Ascending aorta (tissue), 2 donors: ENCODE measurements at regions of chr19 and their contacts with region 1.

Region 1: DNA sequence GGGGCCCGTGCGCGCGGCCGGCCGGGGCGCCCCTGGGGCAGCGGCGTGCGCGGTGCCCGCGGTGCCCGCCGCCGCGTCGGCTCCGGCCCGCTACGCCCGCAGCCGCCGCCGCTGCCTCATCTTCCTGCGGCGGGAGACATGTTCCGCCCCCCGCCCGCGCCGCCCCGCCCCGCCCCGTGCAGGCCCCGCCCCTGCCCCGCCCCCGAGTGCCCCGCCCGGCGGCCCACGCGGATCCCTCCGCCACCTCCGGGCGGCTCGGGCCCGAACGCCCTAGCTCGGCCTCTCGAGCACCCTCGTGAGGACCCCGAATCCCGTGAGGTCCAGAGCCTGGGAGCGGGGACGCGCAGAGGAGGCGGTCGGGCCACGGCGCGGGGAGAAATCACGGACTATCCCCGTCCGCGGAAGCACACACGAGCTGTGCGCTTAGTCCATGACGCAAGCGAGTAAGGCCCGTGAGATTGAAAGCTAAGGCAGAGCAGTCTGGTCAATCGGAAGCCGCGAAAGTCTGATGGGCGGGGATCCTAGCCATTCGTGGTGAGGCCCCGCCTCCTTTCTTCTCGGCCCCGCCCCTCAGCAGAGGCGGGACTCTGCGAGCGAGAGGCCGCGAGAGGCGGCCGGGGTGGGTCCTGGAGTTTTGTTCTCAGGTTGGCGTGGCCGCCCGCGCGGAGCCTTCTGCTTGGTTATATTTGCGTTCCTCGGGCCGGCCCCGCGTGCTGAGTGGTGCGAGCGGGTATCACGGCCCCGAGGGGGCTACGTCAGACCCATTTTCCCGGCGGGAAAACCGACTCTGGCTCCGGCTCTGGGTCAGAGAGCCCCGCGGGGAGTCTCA is at the start of gene TCF3:
- DNase-seq: peak; percentile 92 to 99
- H3K4me3 ChIP-seq: peak within 1 kb of the TSS; percentile 87 to 98
- H3K27ac ChIP-seq: peak within 1 kb of the TSS; percentile 99 to 100
- H3K4me1 ChIP-seq: peaks cover 0 to 14% of the 10 kb centered on the region in 2 donors
- H3K27me3 ChIP-seq: no peaks in the 10 kb centered on the region
- CTCF ChIP-seq: no peak
- total RNA-seq, gene TCF3: 209 TPM

Region 2: DNA sequence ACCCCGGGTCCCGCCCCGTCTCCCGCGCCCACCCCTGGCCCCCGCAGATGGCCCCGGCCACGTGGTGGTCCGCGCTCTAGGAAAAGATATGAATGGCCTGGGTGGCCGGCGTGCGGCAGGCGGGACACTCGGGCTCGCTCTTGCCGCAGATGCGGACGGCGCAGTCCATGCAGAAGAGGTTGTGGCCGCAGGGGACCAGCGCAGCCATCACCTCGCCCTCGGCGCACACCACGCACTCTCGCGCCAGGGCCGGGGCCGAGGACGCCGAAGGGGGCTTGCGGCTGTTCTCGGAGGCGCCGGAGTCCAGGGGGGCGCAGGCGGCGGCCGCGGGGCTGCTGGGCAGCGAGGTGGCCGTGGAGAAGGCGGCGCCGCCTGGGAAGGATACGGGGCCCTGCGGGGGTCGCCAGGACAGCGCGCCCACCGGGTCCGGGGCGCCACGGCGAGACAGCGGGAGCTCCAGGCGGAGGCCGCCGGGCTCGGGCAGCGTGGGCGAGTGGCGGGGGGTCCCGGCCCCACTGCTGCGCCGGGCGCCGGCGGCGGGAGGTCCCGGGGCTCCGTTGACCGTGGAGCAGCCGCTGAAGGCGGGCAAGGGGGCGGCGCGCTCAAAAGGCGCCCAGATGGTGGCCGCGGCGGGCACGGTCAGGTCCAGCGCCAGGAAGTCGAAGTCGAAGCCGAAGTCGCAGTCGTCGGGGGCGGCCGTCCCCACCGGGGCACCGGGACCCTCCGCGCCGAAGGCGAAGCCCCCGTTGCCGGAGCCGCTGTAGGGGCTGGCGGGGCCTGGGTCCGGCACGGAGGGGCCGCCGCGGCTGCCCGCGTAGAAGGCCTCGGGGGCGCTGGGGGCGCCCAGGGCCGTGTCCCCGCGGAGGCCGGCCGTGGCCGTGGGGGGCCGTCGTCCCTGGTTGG is 96.9 kb before region 1 on chr19:
- intact Hi-C with region 1: no loop called
- DNase-seq: no peak
- H3K4me3 ChIP-seq: no peak overlapping the region
- H3K27ac ChIP-seq: no peak overlapping the region
- H3K4me1 ChIP-seq: no peaks in the 10 kb centered on the region
- H3K27me3 ChIP-seq: no peaks in the 10 kb centered on the region
- CTCF ChIP-seq: no peak

Region 3: DNA sequence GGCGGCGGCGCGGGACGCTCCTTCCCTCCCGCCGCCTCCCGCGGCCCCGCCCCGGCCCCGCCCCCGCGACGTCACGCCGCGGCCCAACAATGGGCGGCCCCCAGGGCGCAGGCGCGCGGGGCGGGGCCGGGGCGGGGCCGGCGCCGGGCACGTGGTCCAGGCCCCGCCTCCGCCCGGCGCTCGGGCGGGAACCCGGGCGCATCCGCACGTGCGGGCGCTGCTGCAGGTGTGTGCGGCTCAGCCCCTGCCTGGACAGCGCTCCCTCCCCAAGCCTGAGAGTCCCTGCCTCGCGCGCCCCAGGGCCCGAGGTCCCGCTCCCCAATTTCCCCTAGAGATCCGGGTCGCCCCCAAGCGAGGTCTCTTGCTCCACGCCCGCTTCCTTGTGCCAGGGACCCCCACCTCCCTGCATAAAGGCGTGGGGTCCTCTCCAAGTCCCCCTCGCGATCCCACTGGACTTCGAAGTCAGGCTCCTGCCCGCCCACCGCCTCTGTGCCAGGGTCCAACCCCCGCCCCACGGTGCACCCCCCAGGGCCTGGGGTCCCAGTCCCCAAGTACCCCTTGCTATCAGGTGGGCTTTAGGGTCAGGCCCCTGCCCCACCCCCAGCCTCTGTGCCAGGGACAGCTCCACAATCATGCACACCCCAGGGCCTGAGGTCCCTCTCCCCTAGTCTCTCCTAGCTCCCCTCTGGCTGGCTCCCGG is 84.2 kb before region 1 on chr19 and contains the start of gene MEX3D:
- intact Hi-C with region 1: loop called (anchors 1 kb)
- DNase-seq: peak in 1 of 2 donors; percentile 85
- H3K4me3 ChIP-seq: peak within 1 kb of the TSS; percentile 57 to 94
- H3K27ac ChIP-seq: peak within 1 kb of the TSS; percentile 72 to 84
- H3K4me1 ChIP-seq: peaks cover 4 to 9% of the 10 kb centered on the region in 2 donors
- H3K27me3 ChIP-seq: no peaks in the 10 kb centered on the region
- CTCF ChIP-seq: no peak
- total RNA-seq, gene MEX3D: 83.7 TPM

Region 4: DNA sequence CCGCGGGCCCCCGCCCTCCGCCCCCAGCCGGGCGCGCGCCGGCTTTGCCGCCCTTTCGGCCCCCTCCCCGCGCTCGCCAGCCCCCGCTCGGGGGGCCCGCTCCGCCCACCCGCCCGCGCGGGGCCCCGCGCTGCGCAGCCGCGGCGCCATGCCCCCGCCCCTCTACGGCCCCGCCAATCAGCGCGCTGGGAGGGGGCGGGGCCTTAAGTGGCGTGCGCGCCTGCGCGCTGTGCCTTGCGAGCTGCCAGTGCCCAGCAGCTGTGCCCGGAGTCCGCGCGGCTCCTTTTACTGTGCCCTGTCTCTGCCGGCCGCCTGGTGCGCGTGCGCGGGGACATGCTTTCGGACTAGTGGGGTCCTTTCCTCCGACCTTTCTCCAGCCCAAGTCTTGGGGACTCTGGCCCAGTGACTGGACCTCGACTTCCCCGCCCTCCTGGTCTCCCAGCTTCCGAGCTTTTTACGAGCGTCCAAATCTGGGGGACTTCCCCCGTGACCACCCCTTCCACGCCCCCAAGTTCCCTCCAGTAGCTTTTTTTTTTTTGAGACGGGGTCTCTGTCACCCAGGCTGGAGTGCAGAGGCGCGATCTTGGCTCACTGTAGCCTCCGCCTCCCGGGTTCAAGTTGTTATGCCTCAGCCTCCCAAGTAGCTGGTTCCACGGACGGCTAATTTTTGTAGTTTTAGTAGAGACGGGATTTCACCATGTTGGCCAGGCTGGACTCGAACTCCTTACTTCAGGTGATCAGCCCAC is 59.8 kb before region 1 on chr19 and contains the start of gene MBD3:
- intact Hi-C with region 1: loop called (anchors 1 kb)
- DNase-seq: peak; percentile 62 to 96
- H3K4me3 ChIP-seq: peak within 1 kb of the TSS; percentile 74 to 89
- H3K27ac ChIP-seq: peak within 1 kb of the TSS; percentile 84 to 94
- H3K4me1 ChIP-seq: peaks cover 8 to 17% of the 10 kb centered on the region in 2 donors
- H3K27me3 ChIP-seq: no peaks in the 10 kb centered on the region
- CTCF ChIP-seq: peak in 1 of 3 experiments; percentile 27
- total RNA-seq, gene MBD3: 143 TPM

Region 5: GRCh38 chr19:1605236-1606137 is 47.2 kb before region 1 on chr19 and contains the start of gene UQCR11:
- intact Hi-C with region 1: loop called (anchors 1 kb)
- DNase-seq: peak; percentile 83 to 97
- H3K4me3 ChIP-seq: peak within 1 kb of the TSS; percentile 93 to 98
- H3K27ac ChIP-seq: peak within 1 kb of the TSS; percentile 92
- H3K4me1 ChIP-seq: peaks cover 15 to 25% of the 10 kb centered on the region in 2 donors
- H3K27me3 ChIP-seq: no peaks in the 10 kb centered on the region
- CTCF ChIP-seq: peak; percentile 59 to 71 (median 65)
- total RNA-seq, gene UQCR11: 61.0 TPM

Region 6: DNA sequence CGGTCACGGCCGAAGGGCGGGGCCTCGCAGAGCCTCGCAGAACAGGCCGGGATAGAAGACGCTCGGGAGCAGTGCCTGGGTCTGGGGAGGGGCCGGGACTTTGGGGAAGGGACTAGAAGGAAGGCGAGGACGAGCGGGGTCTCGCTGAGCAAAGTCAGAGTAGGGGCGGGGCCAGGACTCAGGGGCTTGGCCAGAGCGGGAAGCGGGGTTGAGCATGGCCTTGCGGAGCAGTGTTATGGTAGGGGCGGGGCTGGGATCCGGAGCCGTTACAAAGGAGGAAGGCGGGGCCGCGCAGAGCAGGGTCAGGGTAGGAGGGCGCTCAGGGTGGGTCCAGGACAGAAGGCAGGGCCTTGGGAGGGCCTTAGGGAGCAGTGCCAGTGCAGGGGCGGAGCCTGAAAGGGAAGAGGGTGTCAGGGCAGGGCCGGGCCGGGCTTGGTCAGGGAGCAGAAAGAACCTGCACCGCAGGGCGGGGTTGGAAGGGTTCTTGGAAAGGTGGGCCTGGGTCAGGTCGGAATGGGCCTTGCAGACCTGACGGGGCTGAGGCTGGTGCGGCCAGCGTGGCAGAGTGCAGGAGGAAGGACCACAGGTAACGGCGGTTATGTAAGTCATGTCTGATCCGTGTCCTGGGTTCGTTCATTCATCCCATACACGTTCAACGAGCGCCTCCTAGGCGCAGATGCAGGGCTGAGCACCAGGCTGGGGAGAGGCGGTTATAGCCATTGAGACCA is 159.9 kb after region 1 on chr19:
- intact Hi-C with region 1: loop called (anchors 1 kb)
- DNase-seq: peak; percentile 84 to 96
- H3K4me3 ChIP-seq: peak overlapping the region; percentile 59 to 67
- H3K27ac ChIP-seq: peak overlapping the region; percentile 65 to 78
- H3K4me1 ChIP-seq: peaks cover 4 to 13% of the 10 kb centered on the region in 2 donors
- H3K27me3 ChIP-seq: no peaks in the 10 kb centered on the region
- CTCF ChIP-seq: peak in 2 of 3 experiments; percentile 55 to 58